ENCODE measurements at regions of chr7 and their contacts with region 1.

Region 1: GRCh38 chr7:27160546-27161213 is 4.2 kb upstream of the HOXA7 start:
- DNase-seq: peak in 3 of 4 donors; percentile 87 to 96 (median 92)
- ATAC-seq: peak; percentile 92
- H3K4me3 ChIP-seq: peak overlapping the region; percentile 56
- H3K27ac ChIP-seq: peak overlapping the region in 1 of 2 donors; percentile 45
- H3K4me1 ChIP-seq: peaks cover 9 to 56% of the 10 kb centered on the region in 2 donors
- H3K27me3 ChIP-seq: peaks cover 76 to 100% of the 10 kb centered on the region in 2 donors
- CTCF ChIP-seq: peak; percentile 100

Region 2: DNA sequence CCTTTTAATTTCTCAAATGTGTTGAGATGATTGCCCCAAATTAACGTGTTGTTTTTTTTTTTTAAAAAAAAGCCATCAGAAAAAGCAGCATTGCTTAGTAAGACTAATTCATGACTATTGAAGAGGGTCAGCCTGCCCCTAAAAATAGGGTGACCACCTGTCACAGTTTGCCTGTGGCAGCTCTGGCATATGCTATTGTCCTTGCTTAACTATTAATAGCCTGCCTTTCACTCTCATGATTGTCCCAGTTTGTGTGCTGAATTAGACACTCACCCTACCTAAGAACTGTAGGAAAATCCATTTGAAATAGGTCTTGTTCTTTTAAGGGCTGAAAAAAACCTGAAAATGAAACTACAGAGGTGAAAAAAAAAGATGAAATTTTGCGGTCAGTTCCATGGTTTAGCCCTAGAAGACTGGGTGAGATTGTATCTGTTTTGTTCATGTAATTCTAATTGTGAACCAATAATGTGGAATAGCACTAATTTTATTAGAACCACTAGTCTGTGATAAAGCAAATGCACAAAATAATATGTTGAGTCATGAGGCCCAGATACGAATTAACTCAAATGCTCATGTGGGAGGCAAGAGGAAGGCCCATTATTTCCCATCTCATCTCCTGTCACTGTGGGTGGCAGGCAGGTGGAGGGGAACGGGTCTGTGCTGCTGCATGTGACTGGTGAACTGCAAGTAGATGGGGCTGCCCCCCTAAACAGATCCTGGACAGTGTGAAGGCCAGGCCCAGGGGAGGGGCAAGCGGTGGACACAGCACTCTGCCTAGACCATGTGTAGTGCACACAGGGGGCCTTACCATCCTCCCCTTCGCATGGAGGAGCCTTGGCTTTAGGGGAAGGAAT is 1274.1 kb before region 1 on chr7:
- intact Hi-C with region 1: loop called in 1 of 2 experiments (anchors 10 kb)
- DNase-seq: peak in 1 of 4 donors; percentile 25
- ATAC-seq: no peak
- H3K4me3 ChIP-seq: no peak overlapping the region
- H3K27ac ChIP-seq: no peak overlapping the region
- H3K4me1 ChIP-seq: no peaks in the 10 kb centered on the region
- H3K27me3 ChIP-seq: peaks cover 20 to 74% of the 10 kb centered on the region in 2 donors
- CTCF ChIP-seq: no peak

Region 3: DNA sequence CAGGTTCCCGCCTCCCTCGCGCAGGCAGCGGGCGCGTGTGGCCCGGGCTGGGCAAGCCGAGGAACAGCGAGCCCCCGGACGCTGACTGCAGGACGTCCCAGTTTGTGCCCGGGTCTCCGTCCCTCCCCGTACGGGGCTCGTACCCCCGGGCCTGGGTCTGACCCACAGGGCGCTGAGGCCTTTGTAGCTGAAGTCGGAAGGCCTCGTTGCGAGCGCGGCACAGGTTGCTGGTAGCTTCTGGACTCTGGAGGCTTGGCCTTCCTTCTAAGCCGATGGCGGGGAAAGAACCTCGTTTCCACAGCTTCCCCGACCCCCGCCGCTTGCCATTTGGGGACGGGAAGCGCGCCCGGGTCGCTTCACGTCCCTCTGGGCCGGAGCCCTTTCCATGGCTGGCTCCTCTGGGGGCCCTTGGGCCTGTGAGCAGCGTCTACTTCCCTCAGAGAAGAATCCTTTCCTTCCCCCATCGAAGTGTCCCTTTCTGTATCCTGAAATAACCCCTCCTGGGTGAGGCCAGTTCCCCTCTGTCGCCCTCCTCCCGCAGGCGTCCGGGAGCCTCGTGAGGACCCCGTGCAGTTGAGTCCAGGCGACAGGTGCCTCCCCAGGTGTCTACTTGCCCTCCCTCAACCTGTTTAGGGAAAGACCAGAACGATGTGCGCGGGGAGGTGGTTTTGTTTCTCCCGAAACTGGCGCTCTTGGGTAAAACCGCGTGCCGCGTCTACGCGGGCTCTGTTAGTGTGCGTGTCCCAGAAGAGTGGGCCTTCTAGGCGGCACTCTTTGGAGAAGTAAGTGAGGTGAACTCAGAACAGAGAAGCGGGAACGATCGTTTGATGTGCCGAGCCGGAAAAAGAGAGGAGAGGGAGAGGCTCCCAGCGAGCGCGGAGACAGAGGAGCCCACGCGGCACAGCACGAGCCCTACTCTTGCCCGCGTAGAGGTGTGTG is 91.2 kb after region 1 on chr7:
- intact Hi-C with region 1: no loop called
- DNase-seq: no peak
- ATAC-seq: no peak
- H3K4me3 ChIP-seq: no peak overlapping the region
- H3K27ac ChIP-seq: no peak overlapping the region
- H3K4me1 ChIP-seq: peaks cover 0 to 10% of the 10 kb centered on the region in 2 donors
- H3K27me3 ChIP-seq: peaks cover 80 to 99% of the 10 kb centered on the region in 2 donors
- CTCF ChIP-seq: no peak